ENCODE measurements at regions of chr5 and their contacts with region 1.

Region 1: DNA sequence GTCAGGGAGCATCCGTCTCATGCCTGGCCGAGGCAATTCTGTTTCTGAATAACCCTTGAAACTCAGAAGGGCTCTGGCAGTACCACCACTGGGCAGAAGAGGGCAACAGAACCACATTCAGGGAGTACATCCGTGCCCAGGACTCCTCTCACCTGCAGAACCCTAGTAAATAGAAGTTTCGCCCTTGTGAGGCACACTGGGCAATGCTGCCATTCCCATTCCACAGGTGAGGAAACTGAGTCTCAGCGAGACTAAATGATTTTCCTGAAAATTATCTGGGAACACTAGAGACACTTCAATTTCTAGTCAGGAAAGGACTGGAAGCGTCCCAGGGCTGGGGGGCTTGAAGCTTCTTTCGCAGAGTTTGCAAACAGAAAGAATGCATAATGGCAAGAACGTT is 74.7 kb downstream of the FGF1 start:
- DNase-seq: peak; percentile 60
- ATAC-seq: peak; percentile 97
- H3K4me3 ChIP-seq: no peak overlapping the region
- H3K27ac ChIP-seq: no peak overlapping the region
- H3K4me1 ChIP-seq: no peaks in the 10 kb centered on the region
- H3K27me3 ChIP-seq: no peaks in the 10 kb centered on the region
- CTCF ChIP-seq: peak; percentile 65 to 91 (median 85)
- POLR2A ChIP-seq: no peak
- RAD21 ChIP-seq: peak; percentile 95

Region 2: GRCh38 chr5:142769741-142770631 is 158.8 kb after region 1 on chr5 and contains the start of gene ARHGAP26:
- CTCF ChIA-PET with region 1: no interaction called
- POLR2A ChIA-PET with region 1: no interaction called
- RAD21 ChIA-PET with region 1: no interaction called
- intact Hi-C with region 1: no loop called
- DNase-seq: peak; percentile 89
- ATAC-seq: peak; percentile 96
- H3K4me3 ChIP-seq: peak within 1 kb of the TSS; percentile 58 to 83
- H3K27ac ChIP-seq: peak within 1 kb of the TSS; percentile 63
- H3K4me1 ChIP-seq: peaks cover 16 to 27% of the 10 kb centered on the region in 2 experiments
- H3K27me3 ChIP-seq: no peaks in the 10 kb centered on the region
- CTCF ChIP-seq: 0 out of 6 replicates have a peak, but pooled peaks of 1 of the 3 experiments have one; percentile 14
- POLR2A ChIP-seq: peak; percentile 60
- RAD21 ChIP-seq: peak; percentile 53
- total RNA-seq, gene ARHGAP26: 34.5 TPM

Region 3: DNA sequence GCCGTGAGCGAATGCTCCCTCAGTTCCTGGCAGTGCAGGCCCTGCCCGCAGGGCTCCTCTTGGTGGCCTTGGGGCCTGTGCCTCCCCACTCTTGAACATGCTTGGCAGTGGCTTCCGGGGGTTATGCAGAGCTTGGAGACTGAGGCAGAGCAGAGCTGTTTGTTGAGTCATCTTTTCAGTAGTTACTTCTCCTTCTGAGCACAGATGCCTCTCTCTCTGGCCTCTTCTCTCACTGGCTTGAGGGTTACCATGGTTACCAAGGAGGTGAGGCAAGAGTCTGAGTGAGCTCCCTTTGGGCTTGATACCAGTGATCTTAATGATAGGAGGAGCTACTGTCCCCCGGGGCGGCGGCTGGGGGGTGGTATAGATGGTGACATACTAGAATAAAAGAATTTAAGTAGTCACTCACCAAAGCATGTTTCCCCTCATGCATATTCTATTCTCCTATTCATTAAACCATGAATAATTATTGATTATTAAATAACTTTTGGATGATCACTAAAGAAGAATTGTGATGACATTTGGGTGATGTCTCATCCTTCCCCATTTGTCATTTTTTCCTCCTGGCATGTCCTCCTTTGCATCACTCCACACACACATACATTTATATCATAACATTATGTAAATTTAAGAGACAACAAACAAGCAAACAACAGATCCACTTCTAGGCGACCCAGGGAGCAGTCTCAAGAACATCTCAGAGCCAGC is 270.1 kb after region 1 on chr5:
- CTCF ChIA-PET with region 1: no interaction called
- POLR2A ChIA-PET with region 1: no interaction called
- RAD21 ChIA-PET with region 1: no interaction called
- intact Hi-C with region 1: loop called (anchors 5 kb)
- DNase-seq: no peak
- ATAC-seq: 0 out of 2 replicates have a peak, but pooled peaks have one; percentile 26
- H3K4me3 ChIP-seq: no peak overlapping the region
- H3K27ac ChIP-seq: no peak overlapping the region
- H3K4me1 ChIP-seq: peaks cover 12 to 14% of the 10 kb centered on the region in 2 experiments; a peak in 3 of 4 replicates
- H3K27me3 ChIP-seq: no peaks in the 10 kb centered on the region
- CTCF ChIP-seq: no peak
- POLR2A ChIP-seq: no peak
- RAD21 ChIP-seq: no peak